Mucosa of descending colon (tissue), 3 donors: ENCODE measurements at regions of chr12 and their contacts with region 1.

Region 1: GRCh38 chr12:120640840-120641833 is 711 bp downstream of the CABP1 start:
- DNase-seq: peak; percentile 63 to 77 (median 63)
- ATAC-seq: peak; percentile 90
- H3K4me3 ChIP-seq: no peak overlapping the region
- H3K4me1 ChIP-seq: peaks cover 11% of the 10 kb centered on the region
- CTCF ChIP-seq: no peak

Region 2: DNA sequence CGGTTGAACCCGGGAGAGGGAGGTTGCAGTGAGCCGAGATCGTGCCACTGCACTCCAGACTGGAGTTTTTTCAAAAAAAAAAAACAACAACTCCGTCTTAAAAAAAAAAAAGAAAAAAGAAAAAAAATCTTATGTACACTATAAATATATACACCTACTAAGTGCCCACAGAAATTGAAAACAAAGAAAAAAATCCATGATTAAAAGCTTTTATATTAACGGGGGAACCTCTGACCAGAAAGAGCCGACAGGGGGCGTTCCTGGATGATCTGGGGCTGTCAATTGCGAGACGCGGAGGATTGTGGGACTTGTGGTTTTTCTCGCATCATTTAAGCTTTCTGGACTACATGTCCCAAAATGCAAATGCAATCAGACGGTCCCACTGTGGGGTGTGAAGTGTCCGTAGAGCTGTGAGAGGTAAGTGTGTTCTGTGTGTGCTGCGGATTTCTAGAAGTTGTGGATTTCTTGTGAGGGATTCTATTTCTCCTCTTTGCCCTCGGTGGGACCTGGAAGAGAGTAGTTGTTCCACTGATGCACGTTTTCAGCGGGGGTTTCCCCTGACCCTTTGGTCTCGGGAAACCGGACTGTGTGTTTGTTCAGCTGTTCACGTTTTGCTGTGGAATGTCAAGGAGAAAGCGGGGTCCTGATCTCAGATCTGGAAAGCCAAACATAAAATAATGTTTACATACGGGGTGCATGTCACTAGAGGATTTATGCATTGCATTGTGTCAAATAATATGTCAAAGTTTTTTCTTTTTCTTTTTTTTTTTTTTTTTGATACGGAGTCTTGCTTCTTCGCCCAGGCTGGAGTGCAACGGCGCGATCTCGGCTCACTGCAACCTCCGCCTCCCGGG is 338.9 kb before region 1 on chr12 and contains the start of gene SIRT4:
- intact Hi-C with region 1: no loop called
- DNase-seq: peak; percentile 84 to 98 (median 85)
- ATAC-seq: peak; percentile 100
- H3K4me3 ChIP-seq: peak within 1 kb of the TSS; percentile 20
- H3K4me1 ChIP-seq: no peaks in the 10 kb centered on the region
- CTCF ChIP-seq: peak; percentile 72
- total RNA-seq, gene SIRT4: 0.53 to 3.9 (median 2.8) TPM

Region 3: GRCh38 chr12:120481022-120481767 is 159.9 kb before region 1 on chr12:
- intact Hi-C with region 1: no loop called
- DNase-seq: no peak
- ATAC-seq: peak; percentile 30
- H3K4me3 ChIP-seq: no peak overlapping the region
- H3K4me1 ChIP-seq: no peaks in the 10 kb centered on the region
- CTCF ChIP-seq: no peak

Region 4: GRCh38 chr12:120702637-120703036 is 61.5 kb after region 1 on chr12:
- intact Hi-C with region 1: loop called in 1 of 2 experiments (anchors 10 kb)
- DNase-seq: peak in 1 of 3 donors; percentile 58
- ATAC-seq: peak; percentile 45
- H3K4me3 ChIP-seq: no peak overlapping the region
- H3K4me1 ChIP-seq: no peaks in the 10 kb centered on the region
- CTCF ChIP-seq: no peak